ENCODE measurements at regions of chr13 and their contacts with region 1.

Region 1: GRCh38 chr13:44435142-44435982 is 61.7 kb downstream of the SERP2 start:
- DNase-seq: peak; percentile 96 to 97
- ATAC-seq: peak; percentile 90
- H3K4me3 ChIP-seq: peak overlapping the region; percentile 84 to 99
- H3K27ac ChIP-seq: peak overlapping the region in 1 of 2 donors; percentile 77
- H3K4me1 ChIP-seq: no peaks in the 10 kb centered on the region
- H3K27me3 ChIP-seq: no peaks in the 10 kb centered on the region

Region 2: DNA sequence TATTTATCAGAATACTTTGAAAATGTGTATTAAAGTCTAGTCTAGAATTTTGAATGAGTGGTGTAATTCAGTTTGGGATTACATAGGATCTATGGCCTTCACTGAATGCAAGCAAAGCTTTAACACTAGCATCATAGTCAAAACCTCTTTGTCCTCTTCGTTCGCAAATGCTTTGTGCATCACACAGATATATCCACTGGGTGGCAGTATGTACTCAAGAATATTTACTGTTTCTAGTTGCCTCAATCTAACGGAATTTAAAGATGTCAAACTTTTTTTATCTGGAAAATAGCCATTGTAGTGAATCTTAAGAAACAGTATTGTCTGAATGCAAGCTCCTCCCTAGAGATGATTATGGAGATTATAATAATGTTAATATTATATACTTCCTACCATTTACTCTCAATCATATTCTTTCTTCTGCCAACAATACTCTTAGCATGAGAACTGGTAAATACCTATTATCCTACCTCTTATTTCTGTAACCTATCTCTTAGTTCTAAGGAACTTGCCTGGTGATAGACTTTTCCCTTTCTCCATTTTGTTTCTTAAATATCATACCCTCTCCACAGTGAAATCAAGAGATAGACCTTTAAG is 529.8 kb before region 1 on chr13:
- intact Hi-C with region 1: loop called (anchors 2 kb)
- DNase-seq: no peak
- ATAC-seq: peak; percentile 85
- H3K4me3 ChIP-seq: no peak overlapping the region
- H3K27ac ChIP-seq: no peak overlapping the region
- H3K4me1 ChIP-seq: peaks cover 0 to 2% of the 10 kb centered on the region in 2 donors
- H3K27me3 ChIP-seq: no peaks in the 10 kb centered on the region

Region 3: GRCh38 chr13:44141725-44142539 is 293.4 kb before region 1 on chr13:
- intact Hi-C with region 1: loop called in 1 of 2 experiments (anchors 5 kb)
- DNase-seq: peak; percentile 99 to 100
- ATAC-seq: peak; percentile 100
- H3K4me3 ChIP-seq: peak overlapping the region; percentile 56 to 78
- H3K27ac ChIP-seq: peak overlapping the region in 1 of 2 donors; percentile 91
- H3K4me1 ChIP-seq: no peaks in the 10 kb centered on the region
- H3K27me3 ChIP-seq: no peaks in the 10 kb centered on the region

Region 4: DNA sequence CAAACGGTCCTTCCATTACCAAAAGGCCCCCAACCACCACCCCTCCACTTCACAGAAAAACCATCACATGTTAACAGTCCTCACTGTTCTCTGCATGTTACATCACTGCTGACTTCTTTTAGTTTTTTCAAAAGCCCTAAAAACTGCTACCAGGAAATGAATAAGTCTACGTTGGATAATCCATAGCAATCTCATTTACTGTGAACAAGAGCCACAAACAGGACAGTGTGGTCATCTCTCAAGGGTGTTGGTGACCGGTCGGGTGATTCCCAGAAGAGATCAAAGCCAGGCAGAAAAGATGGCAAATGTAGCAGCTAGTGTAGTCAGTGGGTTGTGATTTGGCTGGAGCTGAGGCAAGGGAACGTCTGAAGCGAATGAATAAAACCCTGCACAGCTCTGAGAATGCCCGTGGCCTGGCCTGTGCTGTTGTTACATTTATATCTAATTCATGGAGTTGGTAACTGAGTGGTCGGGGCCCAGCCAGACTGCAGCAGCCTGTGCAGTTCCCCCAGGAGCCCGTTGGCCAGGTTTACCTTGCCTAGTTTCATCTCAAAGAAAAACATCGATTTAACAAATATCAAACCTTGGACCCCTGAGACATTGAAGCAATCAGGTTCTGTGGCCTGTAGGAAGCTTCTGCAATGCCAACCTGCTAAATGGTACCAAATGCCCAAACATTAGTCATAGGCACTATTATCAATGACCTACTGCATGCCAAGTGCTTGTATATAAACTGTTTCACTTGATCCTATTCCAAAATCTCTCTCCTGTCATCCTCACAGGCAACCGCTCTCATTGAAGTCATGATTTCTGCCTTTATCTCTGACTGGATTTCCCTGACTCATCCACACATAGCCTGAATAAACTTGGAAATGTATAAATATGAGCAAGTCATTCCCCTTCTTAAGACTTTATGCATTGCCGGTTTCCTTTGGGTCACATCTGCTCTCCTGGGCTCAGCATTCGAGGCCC is 215.5 kb before region 1 on chr13:
- intact Hi-C with region 1: loop called in 1 of 2 experiments (anchors 5 kb)
- DNase-seq: no peak
- ATAC-seq: peak; percentile 33
- H3K4me3 ChIP-seq: no peak overlapping the region
- H3K27ac ChIP-seq: peak overlapping the region in 1 of 2 donors; percentile 62
- H3K4me1 ChIP-seq: peaks cover 1 to 4% of the 10 kb centered on the region in 2 donors
- H3K27me3 ChIP-seq: no peaks in the 10 kb centered on the region

Region 5: GRCh38 chr13:44306401-44307192 is 128.8 kb before region 1 on chr13:
- intact Hi-C with region 1: loop called (anchors 2 to 5 kb)
- DNase-seq: peak; percentile 77 to 86
- ATAC-seq: peak; percentile 72
- H3K4me3 ChIP-seq: no peak overlapping the region
- H3K27ac ChIP-seq: peak overlapping the region; percentile 31 to 64
- H3K4me1 ChIP-seq: peaks cover 3 to 4% of the 10 kb centered on the region in 2 donors
- H3K27me3 ChIP-seq: no peaks in the 10 kb centered on the region

Region 6: GRCh38 chr13:44373601-44374348 is 61.6 kb before region 1 on chr13 and contains the start of gene SERP2:
- intact Hi-C with region 1: loop called in 1 of 2 experiments (anchors 5 kb)
- DNase-seq: peak; percentile 66 to 76
- ATAC-seq: peak; percentile 72
- H3K4me3 ChIP-seq: peak within 1 kb of the TSS; percentile 14 to 63
- H3K27ac ChIP-seq: peak within 1 kb of the TSS in 1 of 2 donors; percentile 36
- H3K4me1 ChIP-seq: no peaks in the 10 kb centered on the region
- H3K27me3 ChIP-seq: no peaks in the 10 kb centered on the region
- total RNA-seq, gene SERP2: 3.4 to 5.2 TPM

Measured in aorta (tissue), 5 donors.